Gastrocnemius medialis (tissue), 4 donors: ENCODE measurements at regions of chr5 and their contacts with region 1.

Region 1: DNA sequence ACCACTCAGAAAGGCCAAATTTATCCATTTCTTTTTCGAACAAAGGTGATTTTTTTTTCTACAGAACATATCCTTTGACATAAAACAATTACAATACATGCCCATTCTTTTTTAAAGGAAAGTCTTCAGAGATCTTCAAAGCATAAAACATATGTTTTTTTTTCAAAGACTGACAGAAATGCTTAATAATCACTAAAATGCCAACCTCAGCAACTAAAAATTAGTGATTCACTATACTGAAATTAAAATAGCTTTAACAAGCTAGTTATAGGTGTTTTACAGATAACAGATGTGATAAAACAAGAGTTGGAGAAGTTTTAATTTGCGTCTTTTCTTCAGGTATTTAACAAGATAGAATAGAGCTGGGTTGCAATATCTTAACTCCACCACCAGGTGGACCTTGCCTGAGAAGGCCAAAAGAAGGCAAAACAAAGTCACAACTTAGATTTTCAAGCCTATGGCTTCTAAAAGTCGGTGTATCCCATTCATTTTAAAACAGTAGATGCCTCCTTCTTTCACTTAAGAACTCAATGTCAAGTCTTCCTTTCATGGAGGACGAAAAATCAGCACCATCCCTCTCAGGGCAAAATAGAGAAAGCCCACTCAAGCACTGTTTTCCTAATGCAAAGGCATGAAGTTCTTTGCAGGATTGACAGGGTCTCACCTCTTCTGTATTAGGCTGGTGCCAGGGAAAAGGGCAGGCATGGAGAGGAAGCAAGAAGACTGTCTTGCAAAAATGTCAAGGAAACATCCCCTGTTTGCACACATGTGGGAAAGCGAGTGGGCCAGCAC is 31.1 kb upstream of the CPLX2 start:
- DNase-seq: no peak
- ATAC-seq: no peak
- H3K4me3 ChIP-seq: no peak overlapping the region
- H3K27ac ChIP-seq: no peak overlapping the region
- H3K4me1 ChIP-seq: no peaks in the 10 kb centered on the region
- H3K27me3 ChIP-seq: no peaks in the 10 kb centered on the region
- CTCF ChIP-seq: peak in 4 of 5 experiments; percentile 6 to 48 (median 39)
- POLR2A ChIP-seq: no peak

Region 2: DNA sequence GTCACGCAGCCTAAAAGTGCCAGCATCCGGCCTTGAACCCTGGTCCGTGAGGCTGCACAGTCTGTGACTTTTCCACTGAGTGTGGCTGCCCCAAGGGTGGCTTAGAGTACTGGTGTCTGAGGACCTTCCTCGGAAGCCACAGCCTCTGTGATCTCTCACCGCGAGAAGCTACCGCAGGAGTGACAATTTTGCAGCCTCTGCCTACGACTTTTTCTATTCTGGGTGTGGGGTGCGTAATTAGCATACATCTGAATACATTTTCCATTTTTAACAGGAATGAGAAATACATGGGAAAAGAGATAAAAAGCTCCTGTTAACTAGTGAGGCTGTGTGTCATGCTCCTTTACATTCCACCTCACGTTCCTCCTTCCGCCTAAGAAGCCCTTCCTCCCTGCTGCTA is 230.7 kb before region 1 on chr5:
- in situ Hi-C with region 1: no loop called
- intact Hi-C with region 1: no loop called
- DNase-seq: no peak
- ATAC-seq: no peak
- H3K4me3 ChIP-seq: no peak overlapping the region
- H3K27ac ChIP-seq: no peak overlapping the region
- H3K4me1 ChIP-seq: no peaks in the 10 kb centered on the region
- H3K27me3 ChIP-seq: no peaks in the 10 kb centered on the region
- CTCF ChIP-seq: no peak
- POLR2A ChIP-seq: no peak

Region 3: DNA sequence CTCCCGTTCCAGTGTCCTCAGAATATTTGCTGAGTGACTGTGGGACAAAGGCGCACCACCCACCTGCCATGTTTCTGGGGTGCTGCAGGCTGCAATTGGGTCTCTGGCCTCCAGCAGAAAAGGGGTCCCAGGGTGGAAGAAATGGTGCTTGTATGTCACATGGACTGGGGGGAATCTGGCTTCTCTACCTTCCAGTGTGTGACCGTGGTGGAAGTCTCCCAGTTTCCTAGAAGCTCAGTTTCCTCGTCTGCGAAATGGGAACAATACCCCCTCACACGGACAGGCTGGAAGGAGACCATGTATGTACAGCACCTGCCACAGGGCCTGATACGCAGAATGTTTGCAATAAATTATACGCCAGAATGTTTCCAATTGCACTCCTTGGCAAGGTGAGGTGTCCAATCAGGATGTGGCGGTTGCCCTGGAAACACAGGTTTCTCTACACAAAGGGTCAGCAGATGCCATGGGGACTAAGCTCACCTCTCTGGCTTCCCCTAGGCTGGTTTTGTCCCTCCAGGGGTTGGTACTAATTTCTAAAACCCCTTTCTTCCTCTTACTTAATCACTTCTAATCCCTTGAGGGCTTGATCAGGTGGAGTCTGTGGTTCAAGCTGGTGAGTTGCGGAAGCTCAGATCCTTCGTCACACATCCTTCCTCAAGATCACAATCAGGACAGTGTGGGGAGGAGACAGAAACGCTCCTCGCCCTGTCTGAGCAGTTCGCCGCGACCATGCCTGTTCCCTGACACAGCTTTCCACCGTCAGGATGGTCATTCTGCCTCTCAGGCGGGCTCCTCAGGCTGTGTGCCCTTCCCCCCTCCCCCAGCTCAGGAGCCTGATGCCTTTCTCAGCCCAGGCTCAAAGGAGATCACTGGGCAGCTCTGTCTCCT is 55.2 kb after region 1 on chr5:
- in situ Hi-C with region 1: no loop called
- intact Hi-C with region 1: loop called (anchors 2 kb)
- DNase-seq: no peak
- ATAC-seq: peak in 1 of 2 donors; percentile 21
- H3K4me3 ChIP-seq: no peak overlapping the region
- H3K27ac ChIP-seq: no peak overlapping the region
- H3K4me1 ChIP-seq: no peaks in the 10 kb centered on the region
- H3K27me3 ChIP-seq: no peaks in the 10 kb centered on the region
- CTCF ChIP-seq: no peak
- POLR2A ChIP-seq: no peak